Stomach (tissue), 19 donors: ENCODE measurements at regions of chr3 and their contacts with region 1.

Region 1: DNA sequence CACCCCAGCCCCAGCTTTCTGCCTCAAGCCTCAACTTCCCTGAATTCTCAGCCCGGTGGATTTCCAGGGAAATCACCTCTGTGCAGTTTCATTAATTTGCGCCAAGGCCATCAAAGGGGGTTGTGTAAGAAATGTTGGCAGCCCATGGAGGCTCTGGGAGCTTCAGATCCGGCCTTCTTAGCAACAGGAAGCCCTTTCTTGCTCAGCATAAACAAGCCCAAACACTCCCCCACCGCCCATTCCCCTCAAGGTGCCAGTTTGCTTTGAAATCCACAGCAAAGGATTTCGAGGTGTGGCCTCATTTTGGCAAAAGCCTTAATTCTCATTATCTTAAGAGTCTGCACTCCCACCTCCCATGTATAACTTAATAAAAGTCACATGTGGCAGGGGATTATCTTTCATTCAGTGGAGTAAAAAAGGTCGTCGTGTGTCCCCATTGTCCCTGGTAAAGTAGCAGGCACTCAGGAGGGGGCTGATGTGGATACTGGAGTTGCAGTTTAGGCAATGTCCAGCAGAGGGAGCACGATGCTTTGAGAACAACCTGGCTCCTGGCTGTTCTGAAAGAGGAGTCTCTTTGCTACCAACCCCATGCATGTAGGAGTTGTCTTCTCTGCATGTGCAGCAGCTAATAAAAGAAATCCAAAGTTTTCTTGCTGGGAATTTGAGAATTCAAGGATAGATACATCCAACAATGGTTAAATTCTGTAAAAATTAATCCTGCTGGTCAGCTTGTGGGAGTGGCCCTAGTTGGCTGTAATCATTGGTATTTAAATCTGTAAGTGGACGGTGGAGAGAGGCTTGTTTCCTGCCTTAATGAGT is 39.5 kb downstream of the EBLN2 start:
- DNase-seq: peak; percentile 89 to 95
- H3K4me3 ChIP-seq: no peak overlapping the region
- H3K27ac ChIP-seq: no peak overlapping the region
- H3K4me1 ChIP-seq: peaks cover 0 to 8% (median 2%) of the 10 kb centered on the region in 4 donors
- H3K27me3 ChIP-seq: no peaks in the 10 kb centered on the region
- CTCF ChIP-seq: peak in 5 of 7 experiments; percentile 93 to 97 (median 95)
- EP300 ChIP-seq: no peak
- POLR2A ChIP-seq: no peak

Region 2: GRCh38 chr3:73188707-73189106 is 87.8 kb after region 1 on chr3:
- intact Hi-C with region 1: no loop called
- DNase-seq: no peak
- H3K4me3 ChIP-seq: no peak overlapping the region
- H3K27ac ChIP-seq: no peak overlapping the region
- H3K4me1 ChIP-seq: no peaks in the 10 kb centered on the region
- H3K27me3 ChIP-seq: no peaks in the 10 kb centered on the region
- CTCF ChIP-seq: no peak
- EP300 ChIP-seq: no peak
- POLR2A ChIP-seq: no peak

Region 3: DNA sequence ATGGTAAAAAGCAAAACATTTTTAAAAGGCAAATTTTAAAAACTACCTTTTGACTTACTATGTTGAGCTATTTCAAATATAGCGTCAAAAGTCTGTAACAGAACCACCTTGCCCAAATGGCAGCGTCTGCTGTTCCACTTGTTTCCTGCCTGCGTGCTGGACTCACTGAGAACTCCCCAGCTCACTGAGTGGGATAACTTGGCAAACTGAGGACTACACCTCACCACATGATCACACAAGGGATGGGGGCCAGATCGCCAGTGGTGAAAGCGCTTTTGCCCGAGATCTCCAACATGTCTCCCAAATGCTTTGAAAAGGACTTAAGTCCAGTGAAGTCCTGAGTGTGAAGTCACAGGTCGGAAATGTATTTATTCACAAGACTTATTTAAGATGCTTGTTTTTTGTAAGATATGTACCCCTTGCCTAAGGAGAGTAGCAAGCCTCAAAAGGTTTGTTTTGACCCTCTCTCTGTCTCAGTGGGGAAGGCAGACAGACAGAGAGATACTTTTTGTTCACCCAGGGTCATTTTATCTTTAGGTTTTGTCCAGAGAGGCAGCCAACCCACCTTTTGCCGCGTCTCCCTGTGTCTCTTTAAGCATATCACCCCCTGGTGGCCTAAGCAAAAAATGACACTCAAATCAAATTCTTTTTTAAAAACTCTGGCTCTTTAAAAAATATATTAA is 331.2 kb after region 1 on chr3:
- intact Hi-C with region 1: loop called (anchors 10 kb)
- DNase-seq: peak in 1 of 2 donors; percentile 72
- H3K4me3 ChIP-seq: peak overlapping the region in 1 of 4 donors; percentile 9
- H3K27ac ChIP-seq: peak overlapping the region in 4 of 5 donors; percentile 16 to 85 (median 34)
- H3K4me1 ChIP-seq: peaks cover 2 to 79% (median 39%) of the 10 kb centered on the region in 4 donors
- H3K27me3 ChIP-seq: no peaks in the 10 kb centered on the region
- CTCF ChIP-seq: peak in 5 of 7 experiments; percentile 25 to 82 (median 33)
- EP300 ChIP-seq: no peak
- POLR2A ChIP-seq: no peak

Region 4: DNA sequence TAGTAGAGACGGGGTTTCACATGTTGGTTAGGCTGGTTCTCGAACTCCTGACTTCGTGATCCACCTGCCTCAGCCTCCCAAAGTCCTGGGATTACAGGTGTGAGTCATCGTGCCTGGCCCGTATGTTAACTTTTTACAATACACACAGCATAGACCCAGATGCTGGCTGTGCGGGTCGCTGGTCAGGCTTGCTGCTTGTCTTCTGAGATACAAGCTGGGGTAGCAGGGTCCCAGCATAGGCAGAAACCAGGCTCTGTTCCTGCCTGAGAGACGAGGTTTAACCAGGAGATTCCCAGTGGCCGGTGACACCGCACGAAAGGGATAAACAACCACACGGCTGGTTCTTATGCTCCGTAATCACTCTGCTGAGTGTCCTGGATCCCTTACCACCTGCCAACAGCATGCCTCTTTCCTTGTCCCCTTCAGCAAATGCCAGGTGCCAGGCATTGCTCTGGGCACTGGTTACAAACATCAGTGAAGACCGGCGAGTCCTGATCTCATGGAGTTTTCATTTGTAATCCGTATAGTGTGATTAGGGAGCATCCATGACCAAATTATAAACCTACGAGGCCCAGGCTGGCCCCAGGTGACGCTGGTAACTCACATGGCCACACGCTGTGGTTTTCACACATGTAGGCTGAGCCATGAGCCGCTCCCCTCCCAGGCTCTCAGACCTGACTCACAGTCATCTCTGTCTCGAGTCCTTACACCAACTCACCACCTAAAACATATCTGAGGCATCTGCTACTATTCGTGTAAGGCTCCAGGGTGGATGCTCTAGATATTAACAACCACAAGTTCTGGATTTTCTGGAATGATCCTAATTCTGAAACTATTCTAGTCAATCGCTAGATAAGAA is 398.0 kb after region 1 on chr3:
- intact Hi-C with region 1: loop called (anchors 5 kb)
- DNase-seq: no peak
- H3K4me3 ChIP-seq: no peak overlapping the region
- H3K27ac ChIP-seq: peak overlapping the region in 2 of 5 donors; percentile 22 to 39
- H3K4me1 ChIP-seq: peaks cover 0 to 41% (median 22%) of the 10 kb centered on the region in 4 donors
- H3K27me3 ChIP-seq: no peaks in the 10 kb centered on the region
- CTCF ChIP-seq: no peak
- EP300 ChIP-seq: no peak
- POLR2A ChIP-seq: no peak